Activated B cell treated with CpG ODN at 0.5 μM for 24 hours (primary cell): ENCODE measurements at regions of chr2 and their contacts with region 1.

Region 1: GRCh38 chr2:231604685-231605606 is 12.3 kb downstream of the TEX44 start:
- DNase-seq: peak; percentile 99
- ATAC-seq: peak; percentile 88
- H3K4me3 Mint-ChIP-seq: peak overlapping the region; percentile 72
- H3K27ac Mint-ChIP-seq: peak overlapping the region; percentile 87
- H3K4me1 Mint-ChIP-seq: peaks cover 31% of the 10 kb centered on the region
- H3K27me3 Mint-ChIP-seq: no peaks in the 10 kb centered on the region
- CTCF ChIP-seq: no peak

Region 2: DNA sequence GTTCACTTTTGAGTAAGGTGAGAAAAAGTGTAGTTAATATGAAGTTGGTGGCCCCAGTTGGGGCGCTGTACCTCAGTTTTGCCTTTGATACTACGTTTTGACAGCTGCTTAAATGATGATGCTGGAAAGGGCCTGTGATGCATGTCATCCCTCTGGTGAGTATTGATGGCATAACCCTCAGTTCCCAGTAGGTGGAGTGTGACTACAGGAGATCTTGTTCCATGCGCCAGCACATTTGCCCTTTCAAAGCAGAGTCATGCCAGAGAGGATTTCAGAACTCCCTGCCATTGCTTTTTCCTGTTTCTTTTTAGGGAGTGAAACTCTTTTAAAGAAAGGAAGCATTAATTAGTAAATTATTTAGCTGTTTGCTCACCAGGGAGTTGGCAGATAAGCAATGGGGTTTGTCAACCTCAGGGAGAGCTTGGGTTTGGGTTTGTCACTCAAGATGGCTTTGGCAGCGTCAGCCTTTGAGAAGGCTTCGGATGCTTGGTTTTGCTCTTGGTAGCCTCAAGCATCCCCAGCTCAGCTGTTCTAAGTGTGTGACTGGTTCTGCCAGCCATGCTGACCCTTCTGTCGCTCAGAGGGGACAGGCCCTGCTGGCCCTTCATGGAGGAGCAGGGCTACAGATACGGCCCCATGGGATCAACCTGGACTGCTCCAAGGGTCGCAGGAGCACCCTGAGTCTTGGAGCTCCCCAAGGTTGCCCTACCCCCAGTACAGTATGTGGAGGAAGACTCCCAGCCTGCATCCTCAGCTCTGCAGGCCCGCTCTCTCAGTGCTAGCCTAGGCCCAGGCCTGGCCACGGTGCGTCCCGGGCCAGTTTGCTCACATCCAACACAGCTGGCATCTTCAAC is 377.4 kb before region 1 on chr2:
- CTCF ChIA-PET with region 1: no interaction called
- POLR2A ChIA-PET with region 1: interaction called, 4 read pairs
- intact Hi-C with region 1: loop called (anchors 5 kb)
- DNase-seq: no peak
- ATAC-seq: peak; percentile 89
- H3K4me3 Mint-ChIP-seq: no peak overlapping the region
- H3K27ac Mint-ChIP-seq: no peak overlapping the region
- H3K4me1 Mint-ChIP-seq: peaks cover 24% of the 10 kb centered on the region
- H3K27me3 Mint-ChIP-seq: no peaks in the 10 kb centered on the region
- CTCF ChIP-seq: peak; percentile 23

Region 3: GRCh38 chr2:231514103-231514950 is 90.6 kb before region 1 on chr2:
- CTCF ChIA-PET with region 1: interaction called, 14 read pairs
- POLR2A ChIA-PET with region 1: no interaction called
- intact Hi-C with region 1: loop called (anchors 1 kb)
- DNase-seq: peak; percentile 97
- ATAC-seq: peak; percentile 99
- H3K4me3 Mint-ChIP-seq: peak overlapping the region; percentile 92
- H3K27ac Mint-ChIP-seq: peak overlapping the region; percentile 96
- H3K4me1 Mint-ChIP-seq: peaks cover 13% of the 10 kb centered on the region
- H3K27me3 Mint-ChIP-seq: no peaks in the 10 kb centered on the region
- CTCF ChIP-seq: no peak

Region 4: GRCh38 chr2:231563378-231563961 is 41.5 kb before region 1 on chr2:
- CTCF ChIA-PET with region 1: interaction called, 10 read pairs
- POLR2A ChIA-PET with region 1: interaction called, 8 read pairs
- intact Hi-C with region 1: loop called (anchors 1 kb)
- DNase-seq: no peak
- ATAC-seq: peak; percentile 78
- H3K4me3 Mint-ChIP-seq: no peak overlapping the region
- H3K27ac Mint-ChIP-seq: no peak overlapping the region
- H3K4me1 Mint-ChIP-seq: peaks cover under 1% of the 10 kb centered on the region
- H3K27me3 Mint-ChIP-seq: peaks cover 2% of the 10 kb centered on the region
- CTCF ChIP-seq: no peak

Region 5: DNA sequence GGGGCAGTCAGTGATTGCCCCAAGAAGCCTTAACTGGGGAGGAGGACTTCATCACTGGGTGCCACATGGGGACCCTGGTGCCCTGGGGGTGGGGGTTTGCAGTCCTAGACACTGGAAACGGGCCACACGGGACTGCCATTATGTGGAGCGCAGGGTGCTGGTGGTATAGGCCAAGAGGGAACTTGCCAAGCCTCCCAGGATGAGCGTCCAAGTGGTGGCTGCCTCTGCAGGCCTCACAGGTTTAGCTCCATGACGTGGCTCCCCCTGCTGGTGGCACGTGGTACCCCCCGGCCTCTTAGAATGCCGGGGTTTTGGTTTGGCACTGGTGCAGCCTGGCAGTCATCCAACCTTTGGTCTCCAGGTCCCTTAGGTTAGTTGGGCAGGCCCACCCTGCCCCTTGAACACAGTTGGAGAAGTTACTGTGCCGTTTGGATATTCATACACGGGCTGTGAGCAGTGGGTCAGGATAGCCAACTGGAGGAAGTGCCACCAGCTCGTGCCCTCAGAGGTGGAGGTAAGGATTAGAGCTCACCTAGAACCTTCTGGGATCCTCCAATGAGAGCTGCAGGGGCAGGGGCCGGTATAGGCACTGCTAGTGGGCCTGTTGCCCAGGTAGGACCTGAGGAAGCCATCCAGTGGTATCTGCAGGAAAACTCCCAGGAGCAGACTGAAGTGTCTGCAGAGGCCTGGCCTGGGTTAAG is 108.9 kb after region 1 on chr2:
- CTCF ChIA-PET with region 1: interaction called, 11 read pairs
- POLR2A ChIA-PET with region 1: interaction called, 315 read pairs
- intact Hi-C with region 1: no loop called
- DNase-seq: peak; percentile 82
- ATAC-seq: peak; percentile 15
- H3K4me3 Mint-ChIP-seq: peak overlapping the region; percentile 55
- H3K27ac Mint-ChIP-seq: peak overlapping the region; percentile 91
- H3K4me1 Mint-ChIP-seq: peaks cover 70% of the 10 kb centered on the region
- H3K27me3 Mint-ChIP-seq: no peaks in the 10 kb centered on the region
- CTCF ChIP-seq: no peak